IMR-90 (cell line): ENCODE measurements at regions of chr11 and their contacts with region 1.

Region 1: DNA sequence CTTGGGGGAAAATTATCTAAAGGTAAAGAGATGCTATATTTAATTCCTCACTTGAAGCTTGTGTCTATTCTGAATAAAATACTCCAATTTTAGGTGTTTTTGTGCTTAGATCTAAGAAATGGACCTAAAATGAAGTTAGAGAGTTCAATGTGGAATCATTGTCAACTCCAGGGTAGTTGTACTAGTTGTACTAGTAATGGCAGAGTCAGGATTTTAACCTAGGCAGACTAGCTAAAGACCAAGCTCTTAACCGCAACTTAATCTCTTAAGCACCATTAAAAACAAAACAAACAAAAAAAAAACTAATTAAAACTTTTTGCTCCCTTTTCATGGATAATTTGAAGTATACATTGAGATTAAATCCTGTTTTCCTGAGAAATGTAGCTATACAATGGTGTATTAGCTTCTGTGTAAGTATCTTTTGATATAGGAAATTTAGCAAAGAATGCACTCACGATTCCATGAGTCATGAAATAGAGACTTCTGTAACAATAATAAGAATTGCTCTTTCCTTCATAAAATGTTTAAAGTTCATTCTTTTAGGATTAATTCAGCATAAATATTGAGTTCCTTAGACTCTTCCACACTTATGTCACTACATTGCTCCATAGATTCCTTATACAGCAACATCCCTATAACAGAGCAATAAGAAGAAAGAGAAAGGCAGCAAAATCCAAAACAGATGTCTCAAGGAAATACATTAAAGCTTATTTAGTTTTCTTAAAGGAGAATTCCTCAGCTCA is 26.5 kb upstream of the SOX6 start:
- DNase-seq: peak; percentile 93
- ATAC-seq: peak; percentile 93
- H3K4me3 ChIP-seq: no peak overlapping the region
- H3K27ac ChIP-seq: peak overlapping the region; percentile 91
- H3K4me1 ChIP-seq: peaks cover 5% of the 10 kb centered on the region
- H3K27me3 ChIP-seq: no peaks in the 10 kb centered on the region
- CTCF ChIP-seq: no peak
- POLR2A ChIP-seq: no peak
- RAD21 ChIP-seq: no peak

Region 2: GRCh38 chr11:16352707-16353106 is 30.1 kb before region 1 on chr11:
- CTCF ChIA-PET with region 1: no interaction called
- POLR2A ChIA-PET with region 1: no interaction called
- dilution Hi-C with region 1: no loop called
- in situ Hi-C with region 1: no loop called
- intact Hi-C with region 1: loop called (anchors 5 kb)
- DNase-seq: no peak
- ATAC-seq: no peak
- H3K4me3 ChIP-seq: no peak overlapping the region
- H3K27ac ChIP-seq: no peak overlapping the region
- H3K4me1 ChIP-seq: peaks cover 8% of the 10 kb centered on the region; the same call in 1 of the 2 replicates
- H3K27me3 ChIP-seq: no peaks in the 10 kb centered on the region
- CTCF ChIP-seq: no peak
- POLR2A ChIP-seq: no peak
- RAD21 ChIP-seq: no peak

Region 3: GRCh38 chr11:16395601-16396000 is 12.8 kb after region 1 on chr11:
- CTCF ChIA-PET with region 1: no interaction called
- POLR2A ChIA-PET with region 1: no interaction called
- dilution Hi-C with region 1: no loop called
- in situ Hi-C with region 1: no loop called
- intact Hi-C with region 1: no loop called
- DNase-seq: peak; percentile 56
- ATAC-seq: no peak
- H3K4me3 ChIP-seq: no peak overlapping the region
- H3K27ac ChIP-seq: no peak overlapping the region
- H3K4me1 ChIP-seq: peaks cover 2% of the 10 kb centered on the region; the same call in 1 of the 2 replicates
- H3K27me3 ChIP-seq: no peaks in the 10 kb centered on the region
- CTCF ChIP-seq: no peak
- POLR2A ChIP-seq: no peak
- RAD21 ChIP-seq: no peak